Psoas muscle (tissue), 8 donors: ENCODE measurements at regions of chr1 and their contacts with region 1.

Region 1: GRCh38 chr1:155893389-155894142 is 17.6 kb downstream of the RIT1 start:
- DNase-seq: no peak
- ATAC-seq: peak in 3 of 4 donors; percentile 50 to 57 (median 56)
- H3K4me3 ChIP-seq: no peak overlapping the region
- H3K27ac ChIP-seq: peak overlapping the region; percentile 74
- H3K4me1 ChIP-seq: peaks cover 10% of the 10 kb centered on the region
- H3K27me3 ChIP-seq: no peaks in the 10 kb centered on the region
- CTCF ChIP-seq: no peak

Region 2: GRCh38 chr1:155352631-155353030 is 540.9 kb before region 1 on chr1:
- intact Hi-C with region 1: loop called in 1 of 2 experiments (anchors 10 kb)
- DNase-seq: no peak
- ATAC-seq: no peak
- H3K4me3 ChIP-seq: no peak overlapping the region
- H3K27ac ChIP-seq: no peak overlapping the region
- H3K4me1 ChIP-seq: no peaks in the 10 kb centered on the region
- H3K27me3 ChIP-seq: no peaks in the 10 kb centered on the region
- CTCF ChIP-seq: no peak